ENCODE measurements at regions of chr2 and their contacts with region 1.

Region 1: DNA sequence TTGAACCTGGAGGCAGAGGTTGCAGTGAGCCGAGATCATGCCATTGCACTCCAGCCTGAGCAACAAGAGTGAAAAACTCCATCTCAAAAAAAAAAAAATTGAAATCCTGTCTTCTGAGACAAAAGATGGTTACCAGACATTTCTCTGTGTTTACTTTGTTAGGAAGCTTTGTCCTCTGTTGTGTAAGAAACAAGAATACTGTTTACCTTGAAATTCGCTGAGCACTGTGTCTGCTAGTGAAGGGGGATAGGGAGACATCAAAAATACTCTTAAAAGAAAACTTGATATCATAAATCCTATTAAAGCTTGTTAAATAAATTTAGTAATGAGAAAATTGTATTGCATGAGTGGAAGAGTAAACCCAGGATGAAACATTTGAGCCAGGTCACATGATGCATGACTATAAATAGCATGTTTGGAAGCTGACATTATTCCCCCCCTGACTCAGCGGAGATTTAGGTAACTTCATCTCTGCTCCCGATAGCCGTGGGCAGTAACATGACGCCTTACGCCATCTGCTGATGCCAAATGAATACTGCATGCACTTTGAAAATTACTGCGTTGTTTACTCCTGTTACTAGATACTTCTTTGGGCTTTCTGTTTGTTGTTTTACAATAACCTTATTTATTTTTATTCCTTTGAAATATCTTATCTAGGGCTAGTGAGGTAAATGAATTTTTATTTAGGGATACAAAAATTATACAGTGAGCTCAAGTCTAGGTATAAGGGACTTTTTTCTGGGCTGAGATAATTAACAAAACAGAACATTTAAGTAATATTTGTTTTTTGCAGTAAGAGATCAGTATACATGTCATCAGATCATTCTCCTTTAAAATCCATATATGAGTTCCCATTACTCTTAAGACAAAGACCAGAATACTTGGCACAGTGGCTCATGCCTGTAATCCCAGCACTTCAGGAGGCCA is 134.9 kb downstream of the MAP3K20 start:
- DNase-seq: peak; percentile 62
- CTCF ChIP-seq: peak; percentile 90

Region 2: DNA sequence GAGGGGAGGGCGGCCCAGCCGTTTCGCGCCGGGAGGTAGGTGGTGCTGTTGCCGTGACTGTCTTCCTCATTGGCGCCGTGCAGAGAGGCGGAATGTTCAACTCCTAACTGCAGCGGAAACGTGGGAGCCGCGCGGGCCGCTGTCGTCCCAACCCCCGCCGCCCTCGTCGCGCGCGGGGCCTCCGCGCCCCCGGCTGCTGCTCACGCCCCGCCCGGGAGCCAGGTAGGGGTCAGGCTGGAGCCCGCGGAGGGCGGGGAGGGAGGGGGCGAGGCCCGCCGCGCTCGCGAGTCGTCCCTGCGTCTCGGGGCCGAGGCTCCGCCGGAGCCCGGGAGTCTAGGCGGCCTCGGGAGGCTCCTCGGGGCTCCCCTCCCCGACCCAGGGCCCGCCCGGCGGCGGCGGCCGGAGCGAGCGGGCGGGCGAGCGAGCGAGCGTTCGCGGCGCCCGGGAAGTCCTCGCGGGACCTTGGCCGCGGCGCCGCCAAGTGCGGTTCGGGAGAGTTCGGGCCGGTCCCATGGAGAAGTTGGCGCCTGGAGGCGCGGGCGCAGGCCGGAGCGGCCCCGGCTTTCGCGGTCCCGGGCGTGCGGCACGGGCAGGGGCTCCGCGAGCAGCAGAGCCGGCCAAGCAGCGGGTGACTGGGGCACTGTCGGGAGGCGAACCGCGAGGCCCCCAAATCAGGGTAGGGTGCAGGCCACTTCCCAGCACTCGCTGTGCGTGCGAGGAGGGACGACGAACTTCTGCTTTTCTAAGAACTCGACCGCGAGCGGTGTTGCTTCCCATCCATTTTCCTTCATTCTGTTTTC is 134.6 kb before region 1 on chr2 and contains the start of gene MAP3K20:
- CTCF ChIA-PET with region 1: interaction called, 14 read pairs
- POLR2A ChIA-PET with region 1: no interaction called
- DNase-seq: peak; percentile 72
- CTCF ChIP-seq: peak; percentile 53

Region 3: DNA sequence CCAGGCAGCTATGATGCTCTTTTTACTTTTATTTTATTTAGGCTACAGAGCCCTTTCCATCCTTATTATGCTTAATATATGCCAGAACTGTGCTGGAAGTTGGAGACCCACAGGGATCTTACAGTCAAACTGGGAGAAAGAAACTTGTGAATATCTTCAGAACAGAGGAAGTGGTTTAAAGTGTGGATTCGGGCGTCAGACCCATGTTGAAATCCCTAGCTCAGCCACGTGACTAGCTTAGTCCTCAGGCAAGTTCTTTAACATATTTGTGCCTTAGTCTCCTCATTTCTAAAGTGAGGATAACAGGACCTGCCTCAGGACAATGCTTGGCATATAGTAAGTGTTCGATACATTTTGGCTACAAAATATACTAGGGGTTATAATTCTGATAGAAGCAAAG is 75.8 kb before region 1 on chr2:
- CTCF ChIA-PET with region 1: interaction called, 10 read pairs
- POLR2A ChIA-PET with region 1: no interaction called
- DNase-seq: no peak
- CTCF ChIP-seq: no peak

Region 4: GRCh38 chr2:173199294-173199693 is 11.2 kb before region 1 on chr2:
- CTCF ChIA-PET with region 1: interaction called, 26 read pairs
- POLR2A ChIA-PET with region 1: no interaction called
- DNase-seq: no peak
- CTCF ChIP-seq: no peak

Region 5: DNA sequence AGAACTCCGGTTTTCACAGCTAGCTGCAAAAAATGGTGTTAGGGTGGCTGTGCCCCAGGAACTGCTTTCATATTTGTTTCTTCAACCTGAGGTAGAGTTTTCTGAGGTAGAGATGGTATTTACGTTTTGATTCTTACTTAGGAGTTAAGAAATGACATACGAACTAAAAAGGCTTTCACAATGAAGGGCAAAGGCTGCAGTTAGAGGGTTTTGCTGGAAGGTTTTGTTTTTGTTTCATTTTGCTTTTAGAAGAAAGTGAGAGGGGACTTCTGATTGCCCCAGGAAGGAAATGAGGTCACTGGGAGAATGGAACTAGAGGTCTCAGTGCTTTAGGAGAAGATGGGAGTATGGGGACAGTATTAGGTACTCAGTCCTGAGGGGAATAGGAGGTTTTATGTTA is 159.7 kb after region 1 on chr2:
- CTCF ChIA-PET with region 1: no interaction called
- POLR2A ChIA-PET with region 1: no interaction called
- DNase-seq: peak; percentile 31
- CTCF ChIP-seq: no peak

Measured in GM10248 (cell line).